ENCODE measurements at regions of chr2 and their contacts with region 1.

Region 1: GRCh38 chr2:120312861-120313694 is 32.9 kb upstream of the INHBB start:
- DNase-seq: peak; percentile 31 to 86
- H3K4me3 ChIP-seq: peak overlapping the region in 3 of 4 experiments; percentile 11 to 51 (median 25); a peak in 4 of 8 replicates
- H3K27ac ChIP-seq: no peak overlapping the region
- H3K4me1 ChIP-seq: peaks cover 1 to 3% (median 2%) of the 10 kb centered on the region in 4 experiments; a peak in 5 of 7 replicates
- H3K27me3 ChIP-seq: peaks cover 4 to 55% (median 40%) of the 10 kb centered on the region in 4 experiments
- CTCF ChIP-seq: peak; percentile 85 to 93 (median 87)
- EP300 ChIP-seq: no peak
- POLR2A ChIP-seq: no peak
- RAD21 ChIP-seq: peak; percentile 85 to 87

Region 2: GRCh38 chr2:120206022-120206581 is 107.0 kb before region 1 on chr2:
- CTCF ChIA-PET with region 1: interaction called, 33 read pairs
- POLR2A ChIA-PET with region 1: no interaction called
- DNase-seq: peak in 1 of 2 experiments; percentile 93
- H3K4me3 ChIP-seq: no peak overlapping the region
- H3K27ac ChIP-seq: no peak overlapping the region
- H3K4me1 ChIP-seq: no peaks in the 10 kb centered on the region; a peak in 1 of 7 replicates
- H3K27me3 ChIP-seq: no peaks in the 10 kb centered on the region; a peak in 1 of 7 replicates
- CTCF ChIP-seq: peak; percentile 90 to 96 (median 92)
- EP300 ChIP-seq: no peak
- POLR2A ChIP-seq: no peak
- RAD21 ChIP-seq: peak; percentile 75 to 86

Region 3: DNA sequence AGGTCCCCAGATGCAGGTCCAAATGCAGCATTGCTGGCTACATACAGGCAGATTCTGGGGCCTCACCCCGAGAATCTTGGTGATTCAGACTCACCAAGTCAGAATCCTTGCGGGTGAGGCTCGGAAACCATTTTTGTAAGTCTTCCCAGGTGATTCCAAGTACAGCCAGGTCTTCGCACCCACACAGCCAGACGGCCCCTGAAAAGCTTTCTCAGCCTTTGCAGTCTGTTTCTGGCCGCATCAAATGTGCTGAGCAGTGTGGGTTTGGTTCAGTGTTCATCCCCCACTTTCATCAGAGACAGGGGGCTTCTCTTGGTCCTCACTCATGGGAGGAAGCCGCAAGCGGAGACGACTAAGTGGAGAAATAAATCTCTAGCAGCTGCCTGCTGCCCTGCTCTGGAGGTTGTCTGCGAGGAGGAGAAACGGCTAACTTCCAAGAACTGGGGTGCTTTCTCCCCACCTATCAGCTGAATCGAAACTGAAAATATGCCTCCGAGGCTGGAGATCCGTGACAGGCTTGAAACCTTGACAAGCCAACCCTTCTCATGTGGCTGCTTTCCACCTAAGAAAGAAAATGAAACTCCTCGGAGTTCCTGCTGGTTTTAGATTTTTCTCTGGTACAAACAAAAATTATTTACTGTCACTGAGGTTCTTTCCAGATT is 81.0 kb before region 1 on chr2:
- CTCF ChIA-PET with region 1: interaction called, 10 read pairs
- POLR2A ChIA-PET with region 1: no interaction called
- DNase-seq: no peak
- H3K4me3 ChIP-seq: no peak overlapping the region
- H3K27ac ChIP-seq: no peak overlapping the region
- H3K4me1 ChIP-seq: no peaks in the 10 kb centered on the region; a peak in 2 of 7 replicates
- H3K27me3 ChIP-seq: peaks cover 0 to 8% (median 0%) of the 10 kb centered on the region in 4 experiments; a peak in 1 of 7 replicates
- CTCF ChIP-seq: no peak
- EP300 ChIP-seq: no peak
- POLR2A ChIP-seq: no peak
- RAD21 ChIP-seq: no peak

Region 4: DNA sequence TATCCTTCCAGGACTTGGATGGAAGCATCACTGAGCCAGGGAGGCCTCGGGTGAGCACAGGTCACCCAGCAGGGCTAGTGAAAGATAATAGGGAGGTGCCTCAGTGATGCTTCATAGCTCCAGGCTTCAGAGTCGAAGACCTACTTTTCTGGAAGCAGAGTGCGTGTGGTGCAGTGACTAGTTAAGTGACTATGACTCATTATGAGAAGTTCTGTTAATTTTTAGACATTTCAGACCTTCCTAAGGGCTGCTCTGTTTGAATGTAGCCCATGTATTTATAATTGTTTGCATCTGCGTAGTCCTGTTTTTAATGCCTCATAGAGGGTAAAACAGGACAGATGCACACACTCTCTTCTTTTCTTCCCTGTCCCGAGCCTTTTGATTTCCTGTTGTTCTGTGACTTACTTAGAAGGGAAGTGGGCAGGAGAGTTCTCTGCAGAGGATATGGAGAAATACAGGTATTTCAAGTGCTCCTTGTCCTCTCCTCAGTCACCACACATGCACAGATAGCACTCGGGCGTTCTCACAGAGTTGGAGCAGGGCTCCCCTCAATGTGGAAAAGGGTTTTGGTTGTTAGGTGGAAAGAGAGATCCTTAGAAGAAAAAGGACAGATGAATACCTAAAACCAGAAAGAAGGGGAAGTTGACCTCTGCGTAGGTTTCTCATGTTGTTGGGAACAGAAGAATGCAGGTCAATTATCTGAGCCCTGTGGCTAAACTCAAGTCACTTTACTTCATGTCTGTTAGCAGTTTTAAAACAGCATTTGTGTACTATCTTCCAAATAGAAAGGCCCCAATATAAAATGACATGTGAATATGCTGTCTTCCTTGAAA is 25.7 kb before region 1 on chr2:
- CTCF ChIA-PET with region 1: interaction called, 12 read pairs
- POLR2A ChIA-PET with region 1: no interaction called
- DNase-seq: no peak
- H3K4me3 ChIP-seq: no peak overlapping the region
- H3K27ac ChIP-seq: no peak overlapping the region
- H3K4me1 ChIP-seq: peaks cover 0 to 15% (median 14%) of the 10 kb centered on the region in 4 experiments
- H3K27me3 ChIP-seq: no peaks in the 10 kb centered on the region; a peak in 2 of 7 replicates
- CTCF ChIP-seq: no peak
- EP300 ChIP-seq: no peak
- POLR2A ChIP-seq: no peak
- RAD21 ChIP-seq: no peak

Region 5: DNA sequence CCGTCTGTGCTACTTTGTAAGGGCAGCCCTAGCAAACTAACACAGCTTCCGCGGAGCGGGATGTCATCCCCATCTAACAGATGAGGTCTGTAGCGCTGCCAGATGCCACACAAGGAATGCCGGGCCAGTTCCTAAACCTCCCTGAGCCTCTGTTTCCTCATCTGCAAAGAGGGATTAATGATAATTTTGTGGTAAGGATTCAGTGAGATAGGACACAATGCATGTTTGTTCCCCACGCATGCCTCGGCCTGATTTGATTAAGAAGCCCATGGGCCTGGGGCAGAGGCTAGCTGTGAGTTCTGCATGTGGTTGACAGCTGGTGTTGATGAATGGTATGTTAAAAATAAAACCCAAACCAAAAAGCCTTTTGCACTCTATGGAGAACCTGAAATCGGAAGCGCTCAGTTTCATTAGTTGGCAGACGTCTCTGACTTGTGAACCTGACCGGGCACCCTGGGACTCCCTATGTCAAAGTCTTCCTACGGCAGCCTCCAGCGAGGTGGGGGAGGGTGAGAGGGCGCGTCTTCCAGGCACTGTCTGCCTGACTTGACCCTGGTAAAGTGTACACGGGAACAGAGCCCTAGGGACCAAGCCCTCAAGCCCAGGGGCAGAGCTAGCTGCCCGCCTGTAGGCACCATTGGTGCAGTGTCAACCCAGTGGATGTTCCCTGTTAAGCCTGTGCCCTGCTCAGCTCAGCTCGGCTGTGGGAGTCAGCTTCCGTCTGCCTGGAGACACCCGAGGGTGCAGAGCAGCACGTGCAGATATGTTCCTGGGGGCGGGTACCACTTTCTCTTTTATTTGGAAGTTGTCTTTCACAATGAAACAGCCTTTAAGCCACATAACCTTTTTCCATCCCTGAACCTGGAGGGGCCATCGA is 18.1 kb after region 1 on chr2:
- CTCF ChIA-PET with region 1: interaction called, 48 read pairs
- POLR2A ChIA-PET with region 1: interaction called, 3 read pairs
- DNase-seq: no peak
- H3K4me3 ChIP-seq: no peak overlapping the region
- H3K27ac ChIP-seq: no peak overlapping the region
- H3K4me1 ChIP-seq: no peaks in the 10 kb centered on the region
- H3K27me3 ChIP-seq: peaks cover 0 to 4% (median 0%) of the 10 kb centered on the region in 4 experiments; a peak in 4 of 7 replicates
- CTCF ChIP-seq: no peak
- EP300 ChIP-seq: no peak
- POLR2A ChIP-seq: no peak
- RAD21 ChIP-seq: no peak

Region 6: GRCh38 chr2:120465989-120466703 is 153.1 kb after region 1 on chr2:
- CTCF ChIA-PET with region 1: interaction called, 15 read pairs
- POLR2A ChIA-PET with region 1: no interaction called
- DNase-seq: peak; percentile 84 to 89
- H3K4me3 ChIP-seq: peak overlapping the region in 2 of 4 experiments; percentile 14 to 30; a peak in 3 of 8 replicates
- H3K27ac ChIP-seq: no peak overlapping the region
- H3K4me1 ChIP-seq: peaks cover 5 to 13% (median 8%) of the 10 kb centered on the region in 4 experiments
- H3K27me3 ChIP-seq: peaks cover 90 to 98% (median 95%) of the 10 kb centered on the region in 4 experiments
- CTCF ChIP-seq: no peak
- EP300 ChIP-seq: peak in 1 of 2 experiments; percentile 60; a peak in 1 of 3 replicates
- POLR2A ChIP-seq: no peak
- RAD21 ChIP-seq: no peak

Region 7: GRCh38 chr2:120735746-120736170 is 422.7 kb after region 1 on chr2 and contains the start of gene GLI2:
- CTCF ChIA-PET with region 1: no interaction called
- POLR2A ChIA-PET with region 1: no interaction called
- DNase-seq: peak; percentile 50 to 90
- H3K4me3 ChIP-seq: peak within 1 kb of the TSS; percentile 80 to 91 (median 89)
- H3K27ac ChIP-seq: peak within 1 kb of the TSS; percentile 79; the same call in 1 of the 2 replicates
- H3K4me1 ChIP-seq: peaks cover 12 to 24% (median 16%) of the 10 kb centered on the region in 4 experiments
- H3K27me3 ChIP-seq: no peaks in the 10 kb centered on the region; a peak in 1 of 7 replicates
- CTCF ChIP-seq: peak; percentile 66 to 98 (median 83)
- EP300 ChIP-seq: no peak
- POLR2A ChIP-seq: no peak
- RAD21 ChIP-seq: peak; percentile 60 to 78
- total RNA-seq, gene GLI2: 46.9 and 49.8 TPM in 2 replicates

Measured in H1 (cell line).